Right ventricle myocardium inferior (tissue), 1 donor: ENCODE measurements at regions of chr11 and their contacts with region 1.

Region 1: GRCh38 chr11:27635567-27636037 is 64.7 kb downstream of the BDNF start:
- DNase-seq: no peak
- ATAC-seq: no peak

Region 2: DNA sequence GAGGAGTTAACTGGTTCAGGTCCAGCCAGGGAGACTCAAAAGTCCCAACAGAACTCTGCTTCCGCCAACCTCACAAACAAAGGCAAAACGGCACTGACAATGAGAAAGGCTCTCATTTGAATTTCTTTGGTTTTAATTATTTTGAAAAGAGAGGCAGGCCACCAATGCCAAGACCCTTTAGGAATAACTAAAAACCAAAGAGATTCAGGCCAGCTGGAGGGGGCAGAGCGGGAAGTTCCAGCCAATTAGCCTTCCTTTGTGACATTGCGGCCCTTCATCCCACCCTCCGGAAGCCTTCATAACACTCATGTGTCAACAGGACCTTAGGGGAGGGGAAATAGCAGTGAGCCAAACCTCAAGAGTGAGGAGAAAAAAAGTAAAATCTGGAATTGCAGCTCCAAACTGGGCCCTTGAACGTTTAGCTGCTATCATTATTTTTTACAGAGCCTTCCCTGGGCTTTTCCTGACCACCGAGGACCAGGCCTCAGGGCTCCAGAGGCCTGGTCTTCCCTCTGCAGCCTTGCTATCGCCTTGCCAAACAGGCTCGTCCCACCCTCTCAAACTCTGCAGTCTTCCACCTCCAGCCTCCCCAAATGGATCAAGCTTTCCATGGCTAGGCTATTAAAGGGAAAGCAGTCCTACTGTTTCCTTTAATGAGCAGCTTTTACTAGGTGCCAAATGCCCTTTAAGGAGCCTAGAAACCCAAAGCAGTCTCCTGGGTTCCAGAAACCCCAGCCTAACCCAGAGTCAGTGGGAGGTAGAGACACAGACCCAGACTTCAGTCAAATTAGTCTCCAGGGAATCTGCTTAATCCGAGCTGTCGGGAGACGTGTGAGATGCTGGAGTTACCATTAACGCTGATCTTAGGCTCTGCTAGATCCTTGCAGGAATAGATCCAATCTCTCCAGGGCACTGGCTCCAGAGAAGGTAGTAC is 386.8 kb before region 1 on chr11:
- intact Hi-C with region 1: no loop called
- DNase-seq: no peak
- ATAC-seq: peak; percentile 59

Region 3: GRCh38 chr11:27524155-27524554 is 111.4 kb before region 1 on chr11:
- intact Hi-C with region 1: loop called (anchors 5 kb)
- DNase-seq: no peak
- ATAC-seq: no peak

Region 4: GRCh38 chr11:27861706-27862430 is 226.3 kb after region 1 on chr11:
- intact Hi-C with region 1: no loop called
- DNase-seq: no peak
- ATAC-seq: peak; percentile 69